ENCODE measurements at regions of chr6 and their contacts with region 1.

Region 1: DNA sequence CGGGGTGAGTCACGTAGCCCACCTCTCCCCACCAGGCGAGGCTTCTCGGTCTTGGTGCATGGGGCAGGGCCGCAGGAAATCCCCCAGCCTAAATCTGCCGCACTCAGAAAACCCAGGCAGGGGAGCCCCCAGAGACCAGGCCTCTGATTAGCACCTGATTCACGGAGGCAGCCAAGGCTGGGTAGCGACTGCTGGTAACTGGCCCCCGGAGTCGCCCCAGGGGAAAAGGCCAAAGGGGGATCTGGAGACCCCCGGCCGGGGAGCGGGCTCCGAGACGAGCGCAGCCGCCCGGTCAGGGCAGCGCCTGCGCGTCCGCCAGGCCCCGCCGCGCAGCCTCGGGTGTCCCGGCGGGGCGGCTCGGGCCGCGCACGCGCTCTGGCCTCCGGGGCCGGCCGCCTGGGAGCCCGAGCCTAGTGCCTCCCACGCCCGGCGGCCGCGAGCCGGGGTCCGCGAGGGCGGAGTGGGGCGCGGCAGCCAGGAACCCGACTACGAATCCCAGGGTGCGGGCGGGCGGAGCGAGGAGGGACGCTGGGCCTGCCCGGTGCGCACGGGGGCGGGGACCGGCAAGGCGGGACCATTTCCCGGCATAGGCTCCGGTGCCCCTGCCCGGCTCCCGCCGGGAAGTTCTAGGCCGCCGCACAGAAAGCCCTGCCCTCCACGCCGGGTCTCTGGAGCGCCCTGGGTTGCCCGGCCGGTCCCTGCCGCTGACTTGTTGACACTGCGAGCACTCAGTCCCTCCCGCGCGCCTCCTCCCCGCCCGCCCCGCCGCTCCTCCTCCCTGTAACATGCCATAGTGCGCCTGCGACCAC is at the start of gene DUSP22:
- DNase-seq: peak; percentile 80
- ATAC-seq: peak; percentile 89
- H3K4me3 ChIP-seq: peak within 1 kb of the TSS; percentile 61 to 85 (median 72)
- H3K27ac ChIP-seq: peak within 1 kb of the TSS; percentile 84
- H3K4me1 ChIP-seq: peaks cover 22% of the 10 kb centered on the region
- H3K27me3 ChIP-seq: peaks cover 0 to 18% of the 10 kb centered on the region in 2 experiments; a peak in 4 of 5 replicates
- CTCF ChIP-seq: no peak
- EP300 ChIP-seq: 0 out of 4 replicates have a peak, but pooled peaks have one; percentile 7 to 22
- POLR2A ChIP-seq: peak; percentile 81 to 83
- RAD21 ChIP-seq: peak; percentile 61
- total RNA-seq, gene DUSP22: 29.1 and 32.8 TPM in 2 replicates

Region 2: DNA sequence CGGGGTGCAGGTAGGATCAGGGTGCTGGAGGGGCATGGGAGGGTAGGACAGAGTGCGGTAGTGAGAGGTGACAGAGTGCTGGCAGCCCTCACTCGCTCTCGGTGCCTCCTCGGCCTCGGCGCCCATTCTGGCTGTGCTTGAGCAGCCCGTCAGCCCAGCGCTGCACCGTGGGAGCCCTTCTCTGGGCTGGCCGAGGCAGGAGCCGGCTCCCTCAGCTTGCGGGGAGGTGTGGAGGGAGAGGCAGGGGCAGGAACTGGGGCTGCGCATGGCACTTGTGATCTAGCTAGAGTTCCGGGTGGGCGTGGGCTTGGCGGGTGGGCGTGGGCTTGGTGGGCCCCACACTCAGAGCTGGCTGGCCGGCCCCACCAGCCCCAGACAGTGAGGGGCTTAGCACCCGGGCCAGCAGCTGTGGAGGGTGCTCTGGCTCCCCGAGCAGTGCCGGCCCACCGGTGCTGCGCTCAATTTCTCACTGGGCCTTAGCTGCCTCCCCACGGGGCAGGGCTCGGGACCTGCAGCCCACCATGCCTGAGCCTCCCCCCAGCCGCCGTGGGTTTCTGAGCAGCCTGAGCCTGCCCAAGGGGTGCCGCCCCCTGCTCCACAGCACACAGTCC is 112.5 kb before region 1 on chr6:
- CTCF ChIA-PET with region 1: no interaction called
- POLR2A ChIA-PET with region 1: no interaction called
- in situ Hi-C with region 1: no loop called
- intact Hi-C with region 1: no loop called
- DNase-seq: no peak
- ATAC-seq: no peak
- H3K4me3 ChIP-seq: no peak overlapping the region
- H3K27ac ChIP-seq: no peak overlapping the region
- H3K4me1 ChIP-seq: no peaks in the 10 kb centered on the region
- H3K27me3 ChIP-seq: peaks cover 2 to 20% of the 10 kb centered on the region in 2 experiments; a peak in 3 of 5 replicates
- CTCF ChIP-seq: no peak
- EP300 ChIP-seq: no peak
- POLR2A ChIP-seq: no peak
- RAD21 ChIP-seq: no peak

Region 3: DNA sequence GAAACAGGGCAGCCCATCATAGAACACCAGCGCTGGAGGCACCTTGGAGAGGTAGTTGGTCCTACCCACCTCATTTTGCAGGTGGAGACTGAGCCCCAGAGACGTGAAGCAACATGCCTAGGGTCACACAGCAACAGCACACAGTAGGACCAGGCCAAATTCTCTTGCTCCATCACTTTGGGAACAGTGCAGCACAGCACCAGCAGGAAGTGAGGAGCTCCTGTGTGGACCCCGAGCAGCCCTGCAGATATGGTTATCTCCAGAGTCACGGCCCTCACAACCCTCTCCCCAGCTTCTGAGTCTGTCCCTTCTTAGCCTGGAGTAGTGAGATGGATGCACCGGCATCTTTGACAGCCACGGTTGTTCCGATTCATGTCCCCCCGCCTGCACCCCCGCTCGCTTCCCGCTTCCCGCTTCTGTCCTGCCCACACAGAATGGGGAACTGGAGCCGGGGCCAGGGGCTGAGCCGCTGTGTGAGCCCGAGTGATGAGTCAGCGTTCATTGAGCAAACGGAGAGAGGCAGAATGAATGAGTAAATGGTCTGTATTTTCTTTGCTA is 72.2 kb before region 1 on chr6:
- CTCF ChIA-PET with region 1: no interaction called
- POLR2A ChIA-PET with region 1: interaction called, 6 read pairs
- in situ Hi-C with region 1: no loop called
- intact Hi-C with region 1: loop called (anchors 2 kb)
- DNase-seq: peak; percentile 71
- ATAC-seq: peak; percentile 78
- H3K4me3 ChIP-seq: peak overlapping the region; percentile 13 to 59 (median 45); a peak in 4 of 6 replicates
- H3K27ac ChIP-seq: peak overlapping the region; percentile 99
- H3K4me1 ChIP-seq: peaks cover 49% of the 10 kb centered on the region
- H3K27me3 ChIP-seq: no peaks in the 10 kb centered on the region
- CTCF ChIP-seq: no peak
- EP300 ChIP-seq: 0 out of 4 replicates have a peak, but pooled peaks of 1 of the 2 experiments have one; percentile 8
- POLR2A ChIP-seq: no peak
- RAD21 ChIP-seq: no peak

Region 4: GRCh38 chr6:1162367-1163275 is 870.7 kb after region 1 on chr6:
- CTCF ChIA-PET with region 1: no interaction called
- POLR2A ChIA-PET with region 1: no interaction called
- in situ Hi-C with region 1: no loop called
- intact Hi-C with region 1: no loop called
- DNase-seq: no peak
- ATAC-seq: no peak
- H3K4me3 ChIP-seq: no peak overlapping the region
- H3K27ac ChIP-seq: no peak overlapping the region
- H3K4me1 ChIP-seq: peaks cover 38% of the 10 kb centered on the region
- H3K27me3 ChIP-seq: no peaks in the 10 kb centered on the region
- CTCF ChIP-seq: no peak
- EP300 ChIP-seq: no peak
- POLR2A ChIP-seq: no peak
- RAD21 ChIP-seq: no peak

Measured in HepG2 (cell line).